GM12878 (cell line): ENCODE measurements at regions of chr15 and their contacts with region 1.

Region 1: DNA sequence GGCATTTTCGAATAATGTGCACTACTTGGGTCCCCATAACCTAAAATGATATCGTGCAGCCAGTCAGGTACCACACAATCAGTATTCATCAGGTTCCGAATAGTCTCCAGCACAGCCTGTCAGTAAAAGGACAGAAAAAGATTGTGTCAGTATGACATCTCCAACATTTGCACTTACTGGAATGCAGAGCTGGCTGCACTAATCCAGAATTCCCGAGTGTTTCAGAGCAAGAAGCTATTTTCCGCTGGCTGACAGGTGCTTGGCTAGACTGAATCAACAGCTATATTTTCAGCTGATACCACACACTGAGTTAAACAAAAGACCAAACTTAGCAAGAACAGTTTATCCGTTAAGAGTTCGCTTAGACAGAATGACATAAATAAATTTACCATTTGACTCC is 68.8 kb downstream of the AQR start:
- DNase-seq: no peak
- ATAC-seq: no peak
- H3K4me3 ChIP-seq: no peak overlapping the region
- H3K27ac ChIP-seq: no peak overlapping the region
- H3K4me1 ChIP-seq: no peaks in the 10 kb centered on the region
- H3K27me3 ChIP-seq: no peaks in the 10 kb centered on the region
- CTCF ChIP-seq: no peak
- EP300 ChIP-seq: no peak
- POLR2A ChIP-seq: no peak
- RAD21 ChIP-seq: no peak

Region 2: GRCh38 chr15:34616613-34617012 is 284.1 kb before region 1 on chr15:
- CTCF ChIA-PET with region 1: no interaction called
- POLR2A ChIA-PET with region 1: no interaction called
- RAD21 ChIA-PET with region 1: no interaction called
- SMC1A ChIA-PET with region 1: no interaction called
- in situ Hi-C with region 1: loop called (anchors 25 kb)
- intact Hi-C with region 1: no loop called
- DNase-seq: no peak
- ATAC-seq: peak; percentile 45; the same call in 2 of the 3 replicates
- H3K4me3 ChIP-seq: no peak overlapping the region
- H3K27ac ChIP-seq: no peak overlapping the region
- H3K4me1 ChIP-seq: no peaks in the 10 kb centered on the region
- H3K27me3 ChIP-seq: peaks cover 0 to 6% of the 10 kb centered on the region in 2 experiments; a peak in 1 of 4 replicates
- CTCF ChIP-seq: 0 out of 6 replicates have a peak, but pooled peaks of 1 of the 3 experiments have one; percentile 5
- EP300 ChIP-seq: no peak
- POLR2A ChIP-seq: no peak
- RAD21 ChIP-seq: peak; percentile 36

Region 3: GRCh38 chr15:34665498-34666116 is 235.1 kb before region 1 on chr15:
- CTCF ChIA-PET with region 1: no interaction called
- POLR2A ChIA-PET with region 1: no interaction called
- RAD21 ChIA-PET with region 1: no interaction called
- SMC1A ChIA-PET with region 1: no interaction called
- in situ Hi-C with region 1: no loop called
- intact Hi-C with region 1: no loop called
- DNase-seq: no peak
- ATAC-seq: no peak
- H3K4me3 ChIP-seq: no peak overlapping the region
- H3K27ac ChIP-seq: no peak overlapping the region
- H3K4me1 ChIP-seq: no peaks in the 10 kb centered on the region
- H3K27me3 ChIP-seq: no peaks in the 10 kb centered on the region; a peak in 1 of 4 replicates
- CTCF ChIP-seq: no peak
- EP300 ChIP-seq: no peak
- POLR2A ChIP-seq: no peak
- RAD21 ChIP-seq: no peak

Region 4: GRCh38 chr15:34837246-34838016 is 63.3 kb before region 1 on chr15:
- CTCF ChIA-PET with region 1: no interaction called
- POLR2A ChIA-PET with region 1: no interaction called
- RAD21 ChIA-PET with region 1: no interaction called
- SMC1A ChIA-PET with region 1: no interaction called
- in situ Hi-C with region 1: no loop called
- intact Hi-C with region 1: no loop called
- DNase-seq: no peak
- ATAC-seq: no peak
- H3K4me3 ChIP-seq: no peak overlapping the region
- H3K27ac ChIP-seq: no peak overlapping the region
- H3K4me1 ChIP-seq: no peaks in the 10 kb centered on the region
- H3K27me3 ChIP-seq: no peaks in the 10 kb centered on the region
- CTCF ChIP-seq: no peak
- EP300 ChIP-seq: no peak
- POLR2A ChIP-seq: no peak
- RAD21 ChIP-seq: no peak

Region 5: GRCh38 chr15:34855397-34855796 is 45.4 kb before region 1 on chr15:
- CTCF ChIA-PET with region 1: no interaction called
- POLR2A ChIA-PET with region 1: no interaction called
- RAD21 ChIA-PET with region 1: no interaction called
- SMC1A ChIA-PET with region 1: no interaction called
- in situ Hi-C with region 1: no loop called
- intact Hi-C with region 1: no loop called
- DNase-seq: no peak
- ATAC-seq: no peak
- H3K4me3 ChIP-seq: no peak overlapping the region
- H3K27ac ChIP-seq: no peak overlapping the region
- H3K4me1 ChIP-seq: no peaks in the 10 kb centered on the region
- H3K27me3 ChIP-seq: no peaks in the 10 kb centered on the region
- CTCF ChIP-seq: no peak
- EP300 ChIP-seq: no peak
- POLR2A ChIP-seq: no peak
- RAD21 ChIP-seq: no peak